Heart left ventricle (tissue), 16 donors: ENCODE measurements at regions of chr17 and their contacts with region 1.

Region 1: GRCh38 chr17:80773243-80773991 is 218.2 kb upstream of the CHMP6 start:
- DNase-seq: peak in 3 of 5 donors; percentile 64 to 81 (median 67)
- ATAC-seq: peak; percentile 96 to 98 (median 96)
- H3K4me3 ChIP-seq: no peak overlapping the region
- H3K27ac ChIP-seq: peak overlapping the region in 7 of 12 donors; percentile 39 to 82 (median 53)
- H3K4me1 ChIP-seq: peaks cover 0 to 19% (median 4%) of the 10 kb centered on the region in 12 donors
- H3K27me3 ChIP-seq: no peaks in the 10 kb centered on the region
- CTCF ChIP-seq: no peak
- POLR2A ChIP-seq: no peak

Region 2: GRCh38 chr17:80850817-80851216 is 77.4 kb after region 1 on chr17:
- intact Hi-C with region 1: loop called in 1 of 10 experiments (anchors 2 kb)
- DNase-seq: peak in 1 of 5 donors; percentile 4
- ATAC-seq: no peak
- H3K4me3 ChIP-seq: no peak overlapping the region
- H3K27ac ChIP-seq: no peak overlapping the region
- H3K4me1 ChIP-seq: peaks cover 0 to 21% (median 0%) of the 10 kb centered on the region in 12 donors
- H3K27me3 ChIP-seq: no peaks in the 10 kb centered on the region
- CTCF ChIP-seq: no peak
- POLR2A ChIP-seq: no peak

Region 3: DNA sequence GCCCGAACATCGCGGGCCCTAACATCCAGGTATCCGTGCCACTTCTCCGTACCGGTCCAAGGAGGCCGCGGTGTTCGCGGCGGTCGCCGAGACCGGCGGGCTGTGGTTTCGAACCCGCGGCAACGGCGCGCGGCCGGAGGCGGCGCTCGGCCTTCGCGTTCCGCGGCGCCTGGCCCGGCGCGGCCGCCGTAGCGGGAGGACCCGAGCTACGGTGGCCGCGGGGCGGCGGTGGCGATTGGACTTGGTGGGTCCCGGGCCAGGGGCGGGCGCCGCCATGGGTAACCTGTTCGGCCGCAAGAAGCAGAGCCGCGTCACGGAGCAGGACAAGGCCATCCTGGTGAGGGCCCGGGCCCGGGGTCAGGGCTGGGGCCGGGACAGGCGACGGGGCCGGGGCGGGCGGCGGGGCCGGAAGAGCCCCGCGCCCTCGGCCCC is 218.2 kb after region 1 on chr17 and contains the start of gene CHMP6:
- intact Hi-C with region 1: no loop called
- DNase-seq: peak; percentile 80 to 90 (median 87)
- ATAC-seq: peak in 3 of 4 donors; percentile 50 to 69 (median 69)
- H3K4me3 ChIP-seq: peak within 1 kb of the TSS; percentile 68 to 100 (median 96)
- H3K27ac ChIP-seq: peak within 1 kb of the TSS in 11 of 12 donors; percentile 41 to 86 (median 64)
- H3K4me1 ChIP-seq: peaks cover 0 to 40% (median 27%) of the 10 kb centered on the region in 12 donors
- H3K27me3 ChIP-seq: peaks cover 0 to 7% (median 0%) of the 10 kb centered on the region in 9 donors
- CTCF ChIP-seq: peak in 7 of 12 donors; percentile 28 to 48 (median 36)
- POLR2A ChIP-seq: peak in 1 of 2 donors; percentile 48
- total RNA-seq, gene CHMP6: 17.9 to 25.9 (median 19.4) TPM